ENCODE measurements at regions of chr11 and their contacts with region 1.

Region 1: DNA sequence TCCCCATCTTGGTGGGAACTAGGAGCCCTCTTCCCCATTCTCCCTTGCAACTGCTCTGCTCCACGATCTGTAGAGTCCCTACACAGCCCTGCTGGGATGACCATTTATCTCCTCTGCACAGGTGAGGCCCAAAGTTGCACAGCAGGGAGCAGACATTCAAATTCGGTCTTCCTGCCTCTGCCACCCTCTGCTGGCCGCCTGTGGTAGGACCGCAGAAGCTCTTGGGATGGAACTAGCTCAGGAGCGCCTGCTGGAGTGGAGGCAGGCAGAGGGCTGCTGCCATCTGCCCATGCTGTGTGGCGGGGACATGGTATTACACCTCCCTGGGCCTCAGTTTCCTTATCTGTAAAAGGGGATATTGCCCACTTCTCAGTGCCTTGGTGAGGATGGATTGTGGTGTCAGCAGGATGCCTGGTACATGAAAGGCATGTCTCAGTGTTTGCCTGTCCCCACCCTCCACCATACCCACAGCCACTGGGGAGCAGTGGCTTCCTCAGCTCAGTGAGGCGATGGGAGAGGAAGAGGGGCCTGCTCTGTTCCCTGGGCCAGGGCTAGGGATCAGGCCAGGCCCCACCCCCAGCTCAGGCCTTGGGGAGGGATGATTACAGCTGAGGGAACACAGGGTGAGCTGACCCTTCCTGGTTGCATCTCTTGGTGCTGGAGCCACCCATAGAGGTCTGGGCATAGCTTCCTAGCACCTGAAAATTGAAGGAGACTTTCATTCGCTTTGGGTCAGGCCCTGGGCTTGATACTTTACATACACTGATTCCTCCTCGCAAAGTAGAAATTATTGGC is 11.3 kb upstream of the OMP start:
- DNase-seq: peak; percentile 82 to 87 (median 85)
- ATAC-seq: peak; percentile 95
- H3K4me3 ChIP-seq: no peak overlapping the region
- H3K27ac ChIP-seq: no peak overlapping the region
- H3K4me1 ChIP-seq: peaks cover 0 to 20% of the 10 kb centered on the region in 2 experiments; a peak in 3 of 5 replicates
- H3K27me3 ChIP-seq: peaks cover 0 to 30% of the 10 kb centered on the region in 2 experiments; a peak in 3 of 5 replicates
- CTCF ChIP-seq: peak; percentile 96 to 99 (median 98)
- EP300 ChIP-seq: no peak
- POLR2A ChIP-seq: no peak
- RAD21 ChIP-seq: peak; percentile 89 to 91

Region 2: GRCh38 chr11:77113382-77114088 is 22.2 kb after region 1 on chr11:
- CTCF ChIA-PET with region 1: interaction called, 3 read pairs
- POLR2A ChIA-PET with region 1: no interaction called
- in situ Hi-C with region 1: no loop called
- intact Hi-C with region 1: loop called (anchors 2 kb)
- DNase-seq: peak; percentile 58 to 70 (median 62)
- ATAC-seq: peak; percentile 75
- H3K4me3 ChIP-seq: no peak overlapping the region
- H3K27ac ChIP-seq: no peak overlapping the region
- H3K4me1 ChIP-seq: peaks cover 0 to 13% of the 10 kb centered on the region in 2 experiments; a peak in 2 of 5 replicates
- H3K27me3 ChIP-seq: peaks cover 6 to 71% of the 10 kb centered on the region in 2 experiments; a peak in 3 of 5 replicates
- CTCF ChIP-seq: peak; percentile 69 to 86 (median 71)
- EP300 ChIP-seq: no peak
- POLR2A ChIP-seq: no peak
- RAD21 ChIP-seq: peak; percentile 28; a peak in 2 of 4 replicates